Gastrocnemius medialis (tissue), 4 donors: ENCODE measurements at regions of chr4 and their contacts with region 1.

Region 1: GRCh38 chr4:21765810-21766407 is 182.7 kb downstream of the KCNIP4 start:
- DNase-seq: no peak
- ATAC-seq: no peak
- H3K4me3 ChIP-seq: no peak overlapping the region
- H3K27ac ChIP-seq: no peak overlapping the region
- H3K4me1 ChIP-seq: no peaks in the 10 kb centered on the region
- H3K27me3 ChIP-seq: no peaks in the 10 kb centered on the region
- CTCF ChIP-seq: peak in 4 of 5 experiments; percentile 24 to 65 (median 49)
- POLR2A ChIP-seq: no peak

Region 2: DNA sequence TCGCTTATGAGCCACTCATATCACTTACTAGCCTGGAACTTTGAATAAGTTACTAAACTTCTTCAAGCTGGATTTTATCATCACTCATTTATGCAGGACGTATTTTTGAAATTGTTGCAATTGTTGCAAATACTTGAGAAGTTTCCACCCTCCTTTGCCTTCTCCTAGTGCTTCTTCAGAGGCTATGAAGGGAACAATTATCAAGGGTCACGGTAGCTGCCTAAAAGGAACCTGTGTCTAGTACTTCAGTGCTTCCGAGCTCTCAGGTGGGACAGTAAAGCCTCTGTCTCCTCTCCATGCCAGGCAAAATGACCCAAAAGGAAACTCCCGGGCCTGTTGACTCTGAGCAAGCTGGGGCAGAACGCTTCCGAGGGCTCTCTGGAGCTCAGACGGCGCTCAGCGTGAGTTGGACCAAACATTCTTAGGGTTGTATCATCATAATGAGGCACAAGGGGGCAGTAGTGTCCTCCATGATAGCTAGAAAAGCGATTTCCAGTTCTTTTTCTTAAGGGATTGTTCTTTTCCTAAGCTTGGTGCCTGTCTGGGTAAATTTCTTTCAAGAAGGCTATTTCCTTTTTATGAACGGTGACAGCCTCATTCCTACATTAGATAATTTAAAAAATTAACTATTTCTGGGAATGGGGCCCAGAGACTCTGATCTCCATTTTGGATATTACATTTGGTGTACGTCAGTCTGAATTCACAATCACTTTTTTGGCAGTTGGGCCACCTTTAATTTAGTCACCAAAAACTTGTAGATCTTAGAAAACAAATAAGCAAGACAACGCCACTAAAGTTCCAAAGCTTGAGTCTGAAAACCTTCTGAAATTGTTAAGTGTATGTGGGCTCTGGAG is 992.5 kb before region 1 on chr4:
- in situ Hi-C with region 1: loop called in 1 of 4 experiments (anchors 25 kb)
- intact Hi-C with region 1: no loop called
- DNase-seq: no peak
- ATAC-seq: no peak
- H3K4me3 ChIP-seq: no peak overlapping the region
- H3K27ac ChIP-seq: no peak overlapping the region
- H3K4me1 ChIP-seq: no peaks in the 10 kb centered on the region
- H3K27me3 ChIP-seq: no peaks in the 10 kb centered on the region
- CTCF ChIP-seq: peak in 2 of 5 experiments; percentile 28 to 47
- POLR2A ChIP-seq: no peak

Region 3: GRCh38 chr4:21512353-21512752 is 253.6 kb before region 1 on chr4:
- in situ Hi-C with region 1: loop called in 2 of 4 experiments (anchors 5 to 25 kb)
- intact Hi-C with region 1: loop called (anchors 5 kb)
- DNase-seq: no peak
- ATAC-seq: no peak
- H3K4me3 ChIP-seq: no peak overlapping the region
- H3K27ac ChIP-seq: no peak overlapping the region
- H3K4me1 ChIP-seq: no peaks in the 10 kb centered on the region
- H3K27me3 ChIP-seq: no peaks in the 10 kb centered on the region
- CTCF ChIP-seq: no peak
- POLR2A ChIP-seq: no peak

Region 4: GRCh38 chr4:21901831-21902230 is 135.9 kb after region 1 on chr4:
- in situ Hi-C with region 1: no loop called
- intact Hi-C with region 1: no loop called
- DNase-seq: no peak
- ATAC-seq: no peak
- H3K4me3 ChIP-seq: no peak overlapping the region
- H3K27ac ChIP-seq: no peak overlapping the region
- H3K4me1 ChIP-seq: no peaks in the 10 kb centered on the region
- H3K27me3 ChIP-seq: no peaks in the 10 kb centered on the region
- CTCF ChIP-seq: no peak
- POLR2A ChIP-seq: no peak